GM12878 (cell line): ENCODE measurements at regions of chr1 and their contacts with region 1.

Region 1: DNA sequence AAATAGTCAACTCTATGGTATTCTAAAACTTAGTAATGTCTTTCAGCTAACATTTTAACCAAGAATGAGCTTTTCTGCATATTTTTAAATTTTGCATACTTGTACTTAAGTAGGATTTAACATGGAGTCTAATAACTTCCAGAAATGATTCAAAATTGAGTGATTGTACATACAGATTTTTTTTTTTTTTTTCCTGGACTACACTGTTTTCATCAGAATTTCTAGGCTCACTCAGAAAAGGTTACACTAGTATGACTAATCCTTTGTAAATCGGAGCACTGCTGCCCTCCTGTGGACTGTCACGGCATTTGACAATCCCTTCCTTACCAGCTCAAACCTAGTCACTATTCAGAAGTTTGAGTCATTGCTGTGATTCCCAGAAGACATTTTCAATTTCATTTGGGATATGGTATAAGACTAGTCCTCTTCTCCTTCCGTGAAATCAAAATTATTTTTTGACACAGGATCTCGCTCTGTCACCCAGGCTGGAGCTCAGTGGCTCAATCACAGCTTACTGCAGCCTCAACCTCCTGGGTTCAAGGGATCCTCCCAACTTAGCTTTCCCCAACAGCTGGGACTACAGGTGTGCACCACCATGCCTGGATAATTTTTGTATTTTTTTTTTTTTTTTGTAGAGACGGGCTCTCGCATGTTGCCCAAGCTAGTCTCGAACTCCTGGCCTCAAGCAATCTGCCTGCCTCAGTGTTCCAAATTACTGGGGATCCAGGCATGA is 45.5 kb downstream of the CD46 start:
- DNase-seq: peak; percentile 38
- ATAC-seq: peak; percentile 84
- H3K4me3 ChIP-seq: no peak overlapping the region
- H3K27ac ChIP-seq: no peak overlapping the region
- H3K4me1 ChIP-seq: peaks cover 15% of the 10 kb centered on the region
- H3K27me3 ChIP-seq: no peaks in the 10 kb centered on the region
- CTCF ChIP-seq: peak; percentile 78 to 83 (median 80)
- EP300 ChIP-seq: no peak
- POLR2A ChIP-seq: no peak
- RAD21 ChIP-seq: peak; percentile 71

Region 2: DNA sequence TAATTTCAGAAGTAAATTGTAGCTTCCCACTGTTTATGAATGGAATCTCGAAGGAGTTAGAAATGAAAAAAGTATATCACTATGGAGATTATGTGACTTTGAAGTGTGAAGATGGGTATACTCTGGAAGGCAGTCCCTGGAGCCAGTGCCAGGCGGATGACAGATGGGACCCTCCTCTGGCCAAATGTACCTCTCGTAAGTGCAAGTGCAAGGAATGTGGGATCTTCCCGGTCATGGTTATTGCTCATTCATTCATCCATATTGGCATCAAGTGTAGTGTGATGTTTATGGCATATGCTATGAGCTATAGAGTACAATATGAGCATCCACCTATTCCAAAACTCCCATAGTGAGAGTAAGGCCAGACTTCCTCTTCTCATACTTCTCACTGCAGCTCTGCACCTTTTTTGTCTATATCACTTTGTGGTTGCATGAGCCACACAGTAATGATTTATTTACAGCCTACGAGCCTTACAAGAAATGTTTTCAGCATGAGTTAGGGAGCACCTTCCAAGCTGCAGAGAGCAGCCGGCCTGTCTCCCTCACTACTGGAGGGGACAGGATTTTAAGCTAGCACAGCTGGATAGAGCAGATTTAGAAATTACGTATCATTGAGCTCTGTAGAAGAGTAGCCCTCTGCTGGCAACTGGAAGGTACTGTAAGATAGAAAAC is 177.4 kb before region 1 on chr1:
- CTCF ChIA-PET with region 1: interaction called, 3 read pairs
- POLR2A ChIA-PET with region 1: no interaction called
- RAD21 ChIA-PET with region 1: interaction called, 11 read pairs
- SMC1A ChIA-PET with region 1: interaction called, 13 read pairs
- in situ Hi-C with region 1: no loop called
- intact Hi-C with region 1: no loop called
- DNase-seq: no peak
- ATAC-seq: peak; percentile 96
- H3K4me3 ChIP-seq: no peak overlapping the region
- H3K27ac ChIP-seq: no peak overlapping the region
- H3K4me1 ChIP-seq: no peaks in the 10 kb centered on the region
- H3K27me3 ChIP-seq: no peaks in the 10 kb centered on the region
- CTCF ChIP-seq: peak; percentile 56 to 80 (median 68)
- EP300 ChIP-seq: no peak
- POLR2A ChIP-seq: no peak
- RAD21 ChIP-seq: peak; percentile 39; the same call in 1 of the 2 replicates

Region 3: DNA sequence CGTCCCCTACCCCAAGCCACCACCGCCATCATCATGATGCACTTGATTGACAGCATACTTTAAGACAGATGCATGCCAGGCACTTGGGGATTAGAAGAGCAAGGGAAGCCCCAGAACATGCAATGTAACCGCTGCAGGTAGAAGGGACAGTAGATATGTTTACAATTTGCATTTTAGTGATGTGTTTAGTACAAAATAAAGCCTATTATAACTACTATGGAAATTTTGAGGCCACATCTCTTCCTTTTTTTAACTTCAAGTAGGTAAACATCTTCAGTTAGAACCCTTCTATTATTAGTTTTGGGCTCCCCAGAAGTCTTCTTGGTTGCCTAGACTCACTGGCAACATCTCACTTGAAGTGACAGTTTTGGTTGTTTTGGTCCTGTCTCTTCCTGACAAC is 127.2 kb before region 1 on chr1:
- CTCF ChIA-PET with region 1: no interaction called
- POLR2A ChIA-PET with region 1: no interaction called
- RAD21 ChIA-PET with region 1: no interaction called
- SMC1A ChIA-PET with region 1: no interaction called
- in situ Hi-C with region 1: no loop called
- intact Hi-C with region 1: no loop called
- DNase-seq: peak; percentile 19
- ATAC-seq: peak; percentile 23
- H3K4me3 ChIP-seq: no peak overlapping the region
- H3K27ac ChIP-seq: no peak overlapping the region
- H3K4me1 ChIP-seq: peaks cover 5% of the 10 kb centered on the region
- H3K27me3 ChIP-seq: peaks cover 0 to 4% of the 10 kb centered on the region in 2 experiments; a peak in 2 of 4 replicates
- CTCF ChIP-seq: no peak
- EP300 ChIP-seq: no peak
- POLR2A ChIP-seq: no peak
- RAD21 ChIP-seq: no peak

Region 4: DNA sequence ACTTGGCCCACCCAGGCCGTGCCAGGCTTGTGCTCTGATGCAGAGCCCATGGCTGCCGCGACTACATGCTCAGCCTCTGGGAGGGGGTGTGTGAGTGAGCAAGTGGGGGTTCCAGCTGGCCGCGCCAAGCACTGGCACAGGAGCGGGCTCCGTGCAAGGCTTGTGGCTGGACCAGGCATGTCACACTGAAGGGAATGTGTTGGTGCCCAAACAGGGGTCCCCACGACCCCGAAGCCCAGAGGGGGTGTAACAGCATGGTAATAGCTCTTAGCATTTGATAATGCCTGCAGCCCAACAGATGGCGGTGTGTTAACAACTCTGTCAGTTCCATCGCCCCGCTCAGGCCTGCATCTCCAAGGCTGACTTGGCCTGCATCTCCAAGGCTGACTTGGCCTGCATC is 83.9 kb before region 1 on chr1:
- CTCF ChIA-PET with region 1: interaction called, 9 read pairs
- POLR2A ChIA-PET with region 1: no interaction called
- RAD21 ChIA-PET with region 1: interaction called, 6 read pairs
- SMC1A ChIA-PET with region 1: interaction called, 4 read pairs
- in situ Hi-C with region 1: no loop called
- intact Hi-C with region 1: loop called (anchors 2 kb)
- DNase-seq: no peak
- ATAC-seq: no peak
- H3K4me3 ChIP-seq: no peak overlapping the region
- H3K27ac ChIP-seq: no peak overlapping the region
- H3K4me1 ChIP-seq: no peaks in the 10 kb centered on the region
- H3K27me3 ChIP-seq: no peaks in the 10 kb centered on the region; a peak in 2 of 4 replicates
- CTCF ChIP-seq: no peak
- EP300 ChIP-seq: no peak
- POLR2A ChIP-seq: no peak
- RAD21 ChIP-seq: no peak

Region 5: DNA sequence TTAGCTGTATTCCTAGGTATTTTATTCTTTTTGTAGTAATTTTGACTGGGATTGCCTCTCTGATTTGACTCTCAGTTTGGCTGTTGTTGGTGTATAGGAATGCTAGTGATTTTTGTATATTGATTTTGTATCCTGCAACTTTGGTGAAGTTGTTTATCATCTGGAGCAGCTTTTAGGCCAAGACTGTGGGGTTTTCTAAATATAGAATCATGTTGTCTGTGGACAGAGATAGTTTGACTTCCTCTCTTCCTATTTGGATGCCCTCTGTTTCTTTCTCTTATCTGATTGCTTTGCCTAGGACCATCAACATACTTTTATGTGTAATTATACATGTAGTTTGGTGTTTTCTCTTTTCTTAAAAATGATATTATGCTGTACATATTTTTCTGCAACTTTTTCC is 18.4 kb before region 1 on chr1:
- CTCF ChIA-PET with region 1: interaction called, 11 read pairs
- POLR2A ChIA-PET with region 1: interaction called, 5 read pairs
- RAD21 ChIA-PET with region 1: interaction called, 5 read pairs
- SMC1A ChIA-PET with region 1: no interaction called
- in situ Hi-C with region 1: no loop called
- intact Hi-C with region 1: no loop called
- DNase-seq: no peak
- ATAC-seq: no peak
- H3K4me3 ChIP-seq: no peak overlapping the region
- H3K27ac ChIP-seq: no peak overlapping the region
- H3K4me1 ChIP-seq: no peaks in the 10 kb centered on the region
- H3K27me3 ChIP-seq: no peaks in the 10 kb centered on the region
- CTCF ChIP-seq: no peak
- EP300 ChIP-seq: no peak
- POLR2A ChIP-seq: no peak
- RAD21 ChIP-seq: no peak

Region 6: GRCh38 chr1:207822602-207823451 is 25.4 kb after region 1 on chr1:
- CTCF ChIA-PET with region 1: interaction called, 45 read pairs
- POLR2A ChIA-PET with region 1: interaction called, 7 read pairs
- RAD21 ChIA-PET with region 1: interaction called, 11 read pairs
- SMC1A ChIA-PET with region 1: interaction called, 16 read pairs
- in situ Hi-C with region 1: no loop called
- intact Hi-C with region 1: no loop called
- DNase-seq: peak; percentile 96
- ATAC-seq: peak; percentile 77
- H3K4me3 ChIP-seq: peak overlapping the region; percentile 93
- H3K27ac ChIP-seq: peak overlapping the region; percentile 95
- H3K4me1 ChIP-seq: peaks cover 34% of the 10 kb centered on the region
- H3K27me3 ChIP-seq: no peaks in the 10 kb centered on the region
- CTCF ChIP-seq: no peak
- EP300 ChIP-seq: 0 out of 4 replicates have a peak, but pooled peaks have one; percentile 9 to 26
- POLR2A ChIP-seq: peak; percentile 80; the same call in 1 of the 2 replicates
- RAD21 ChIP-seq: no peak

Region 7: DNA sequence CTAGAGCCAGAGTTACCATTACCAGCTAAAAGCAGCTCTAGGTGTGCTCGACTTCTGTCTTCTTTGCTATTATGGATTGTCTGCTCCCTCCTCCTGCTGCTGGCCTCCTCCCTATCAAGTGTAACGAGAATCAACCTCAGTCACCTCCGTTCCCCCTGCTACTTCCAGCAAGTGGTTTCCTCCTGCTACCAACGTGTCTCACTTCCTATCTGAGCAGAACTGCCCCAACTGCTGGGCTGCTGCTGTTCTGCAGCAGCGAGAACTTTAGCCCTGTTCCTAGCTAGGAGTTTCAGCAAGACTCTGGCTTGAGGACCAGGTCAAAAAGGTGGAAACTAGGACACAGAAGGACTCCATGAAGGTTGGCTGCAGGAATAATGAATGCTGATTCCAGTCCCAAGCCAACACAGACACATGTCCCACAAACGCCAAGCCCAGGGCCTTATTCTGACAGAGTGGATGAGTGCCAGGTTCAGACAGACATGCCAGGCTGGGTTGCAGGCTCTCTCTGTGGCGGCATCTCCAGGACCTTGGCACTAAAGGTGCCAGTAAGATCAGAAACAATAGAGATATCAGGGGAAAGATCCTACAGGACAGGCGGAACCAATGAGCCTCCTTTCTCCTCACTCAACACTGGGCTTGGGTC is 66.6 kb after region 1 on chr1:
- CTCF ChIA-PET with region 1: interaction called, 34 read pairs
- POLR2A ChIA-PET with region 1: interaction called, 4 read pairs
- RAD21 ChIA-PET with region 1: interaction called, 14 read pairs
- SMC1A ChIA-PET with region 1: interaction called, 16 read pairs
- in situ Hi-C with region 1: no loop called
- intact Hi-C with region 1: no loop called
- DNase-seq: peak; percentile 70
- ATAC-seq: peak; percentile 80
- H3K4me3 ChIP-seq: peak overlapping the region; percentile 17; the same call in 1 of the 2 replicates
- H3K27ac ChIP-seq: peak overlapping the region; percentile 38
- H3K4me1 ChIP-seq: peaks cover 48% of the 10 kb centered on the region
- H3K27me3 ChIP-seq: no peaks in the 10 kb centered on the region
- CTCF ChIP-seq: peak; percentile 13 to 38 (median 30); a peak in 2 of 6 replicates
- EP300 ChIP-seq: 0 out of 4 replicates have a peak, but pooled peaks of 1 of the 2 experiments have one; percentile 19
- POLR2A ChIP-seq: peak; percentile 51
- RAD21 ChIP-seq: 0 out of 2 replicates have a peak, but pooled peaks have one; percentile 21

Region 8: DNA sequence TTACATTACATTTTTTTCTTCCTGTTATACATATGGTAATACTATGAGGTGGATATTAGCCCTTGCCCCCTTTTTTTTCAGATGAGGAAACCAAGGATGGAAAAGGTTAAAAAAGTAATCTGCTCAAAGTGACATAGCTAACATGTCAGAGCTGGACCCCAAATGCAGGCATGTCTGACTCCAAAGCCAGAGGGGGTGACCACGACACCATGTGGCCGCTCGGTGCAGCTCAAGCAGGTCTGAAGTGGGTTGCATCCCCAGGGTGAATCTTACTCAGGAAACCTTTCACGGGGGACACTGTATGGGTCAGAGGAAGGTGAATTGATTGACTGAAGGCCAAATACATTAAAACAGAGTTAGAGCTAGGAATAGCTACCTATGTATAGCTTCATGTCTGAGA is 78.7 kb after region 1 on chr1:
- CTCF ChIA-PET with region 1: interaction called, 23 read pairs
- POLR2A ChIA-PET with region 1: interaction called, 5 read pairs
- RAD21 ChIA-PET with region 1: interaction called, 5 read pairs
- SMC1A ChIA-PET with region 1: interaction called, 8 read pairs
- in situ Hi-C with region 1: no loop called
- intact Hi-C with region 1: no loop called
- DNase-seq: no peak
- ATAC-seq: peak; percentile 45; the same call in 2 of the 3 replicates
- H3K4me3 ChIP-seq: no peak overlapping the region
- H3K27ac ChIP-seq: no peak overlapping the region
- H3K4me1 ChIP-seq: peaks cover 20% of the 10 kb centered on the region
- H3K27me3 ChIP-seq: no peaks in the 10 kb centered on the region
- CTCF ChIP-seq: peak in 2 of 3 experiments; percentile 21 to 38; a peak in 3 of 6 replicates
- EP300 ChIP-seq: no peak
- POLR2A ChIP-seq: no peak
- RAD21 ChIP-seq: peak; percentile 46